ENCODE measurements at regions of chr5 and their contacts with region 1.

Region 1: GRCh38 chr5:73448463-73449136 is at the start of gene FOXD1:
- ATAC-seq: peak; percentile 80 to 90 (median 88)
- H3K4me3 ChIP-seq: peak within 1 kb of the TSS; percentile 42 to 94 (median 59)
- H3K27ac ChIP-seq: peak within 1 kb of the TSS in 1 of 2 donors; percentile 18
- H3K4me1 ChIP-seq: peaks cover 12 to 27% of the 10 kb centered on the region in 2 donors
- total RNA-seq, gene FOXD1: 2.2 to 37.2 (median 5.9) TPM

Region 2: DNA sequence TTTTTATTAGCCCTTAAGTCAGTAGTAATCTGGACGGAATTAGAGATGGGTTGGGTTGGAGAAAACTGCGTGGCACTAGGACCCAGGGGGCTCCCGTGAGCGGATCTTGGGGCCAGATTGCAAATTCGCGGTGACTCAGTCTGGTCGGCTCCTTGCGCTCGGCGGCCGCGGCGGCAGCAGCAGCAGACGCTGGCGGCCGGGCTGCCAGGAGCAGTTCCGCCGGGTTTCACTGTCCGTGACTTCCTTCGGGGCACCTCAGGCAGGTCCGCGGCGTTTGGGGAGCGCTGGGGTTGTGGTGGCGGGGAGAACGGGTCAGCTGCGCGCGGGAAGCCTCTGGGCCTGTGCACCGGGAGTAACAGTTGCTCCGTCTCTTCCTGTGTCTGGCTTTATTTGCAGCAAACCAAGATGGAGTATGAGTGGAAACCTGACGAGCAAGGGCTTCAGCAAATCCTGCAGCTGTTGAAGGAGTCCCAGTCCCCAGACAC is 600.6 kb before region 1 on chr5:
- in situ Hi-C with region 1: no loop called
- ATAC-seq: peak; percentile 75 to 87 (median 80)
- H3K4me3 ChIP-seq: peak overlapping the region; percentile 68 to 89 (median 72)
- H3K27ac ChIP-seq: peak overlapping the region; percentile 87 to 93
- H3K4me1 ChIP-seq: peaks cover 3 to 32% of the 10 kb centered on the region in 2 donors

Region 3: GRCh38 chr5:73120222-73121118 is 328.1 kb before region 1 on chr5 and contains the start of gene TMEM171:
- in situ Hi-C with region 1: loop called in 1 of 9 experiments (anchors 25 kb)
- ATAC-seq: peak; percentile 76 to 97 (median 81)
- H3K4me3 ChIP-seq: peak within 1 kb of the TSS; percentile 29 to 44 (median 35)
- H3K27ac ChIP-seq: no peak within 1 kb of the TSS
- H3K4me1 ChIP-seq: no peaks in the 10 kb centered on the region
- total RNA-seq, gene TMEM171: 0.11 to 7.4 (median 0.85) TPM in 5 of 8 experiments, not detected in the others

Region 4: GRCh38 chr5:73215891-73216610 is 232.5 kb before region 1 on chr5:
- in situ Hi-C with region 1: loop called in 5 of 9 experiments (anchors 25 kb)
- ATAC-seq: peak; percentile 98 to 100 (median 100)
- H3K4me3 ChIP-seq: peak overlapping the region; percentile 37 to 55 (median 43)
- H3K27ac ChIP-seq: no peak overlapping the region
- H3K4me1 ChIP-seq: peaks cover 0 to 9% of the 10 kb centered on the region in 2 donors